Endothelial cell of umbilical vein (primary cell): ENCODE measurements at regions of chr3 and their contacts with region 1.

Region 1: DNA sequence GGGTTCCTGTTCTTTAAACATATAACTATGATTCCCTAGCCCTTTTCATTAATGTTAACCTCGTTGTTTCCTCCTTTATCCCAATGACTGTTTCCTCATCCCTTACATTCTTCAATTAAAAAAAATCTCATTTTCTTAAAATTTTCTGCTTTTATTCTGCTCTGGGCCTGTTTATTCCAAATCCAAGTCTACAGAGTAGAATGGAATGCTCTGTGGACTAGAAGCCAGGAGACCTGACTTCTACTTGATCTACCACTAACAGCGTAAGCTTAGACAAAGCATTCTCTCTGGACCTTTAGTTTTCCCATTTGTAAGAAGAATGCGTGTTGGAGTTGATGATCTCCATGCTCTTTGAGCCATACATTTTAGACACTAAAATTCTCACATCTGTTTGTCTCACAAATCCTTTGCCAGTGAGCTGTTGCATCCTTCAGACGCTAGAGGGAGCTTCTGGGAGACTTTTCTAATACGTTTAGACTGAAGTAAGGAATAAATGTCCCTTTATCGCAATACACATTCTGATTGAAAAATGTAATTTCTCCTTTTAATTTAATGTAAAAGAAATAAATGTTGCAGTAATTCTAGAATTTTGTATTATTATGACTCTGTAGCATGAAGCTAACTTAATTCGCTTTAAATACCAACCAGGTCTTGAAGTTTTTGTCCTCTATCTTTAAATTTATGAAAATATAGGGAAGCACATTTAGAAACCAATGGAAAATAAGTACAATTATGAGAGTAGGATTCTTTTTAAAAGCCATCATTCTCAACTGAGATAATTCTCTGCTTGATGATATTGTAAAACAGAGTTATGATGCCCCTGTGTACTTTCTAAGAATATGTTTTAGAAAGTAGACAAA is 21.7 kb upstream of the GMNC start:
- DNase-seq: peak; percentile 64
- H3K4me3 ChIP-seq: no peak overlapping the region
- H3K27ac ChIP-seq: no peak overlapping the region
- H3K4me1 ChIP-seq: no peaks in the 10 kb centered on the region
- H3K27me3 ChIP-seq: no peaks in the 10 kb centered on the region
- CTCF ChIP-seq: peak; percentile 77 to 78
- POLR2A ChIP-seq: no peak

Region 2: GRCh38 chr3:190862209-190863118 is 21.7 kb before region 1 on chr3 and contains the start of gene GMNC:
- CTCF ChIA-PET with region 1: interaction called, 13 read pairs
- POLR2A ChIA-PET with region 1: no interaction called
- dilution Hi-C with region 1: no loop called
- intact Hi-C with region 1: no loop called
- DNase-seq: peak; percentile 66
- H3K4me3 ChIP-seq: peak within 1 kb of the TSS; percentile 23 to 59 (median 46)
- H3K27ac ChIP-seq: no peak within 1 kb of the TSS
- H3K4me1 ChIP-seq: no peaks in the 10 kb centered on the region
- H3K27me3 ChIP-seq: peaks cover 2 to 14% of the 10 kb centered on the region in 2 experiments
- CTCF ChIP-seq: no peak
- POLR2A ChIP-seq: no peak
- total RNA-seq, gene GMNC: not detected in 2 replicates

Region 3: GRCh38 chr3:190870127-190870526 is 14.1 kb before region 1 on chr3:
- CTCF ChIA-PET with region 1: interaction called, 20 read pairs
- POLR2A ChIA-PET with region 1: interaction called, 3 read pairs
- dilution Hi-C with region 1: no loop called
- intact Hi-C with region 1: no loop called
- DNase-seq: no peak
- H3K4me3 ChIP-seq: no peak overlapping the region
- H3K27ac ChIP-seq: no peak overlapping the region
- H3K4me1 ChIP-seq: no peaks in the 10 kb centered on the region
- H3K27me3 ChIP-seq: peaks cover 0 to 2% of the 10 kb centered on the region in 2 experiments
- CTCF ChIP-seq: no peak
- POLR2A ChIP-seq: no peak

Region 4: DNA sequence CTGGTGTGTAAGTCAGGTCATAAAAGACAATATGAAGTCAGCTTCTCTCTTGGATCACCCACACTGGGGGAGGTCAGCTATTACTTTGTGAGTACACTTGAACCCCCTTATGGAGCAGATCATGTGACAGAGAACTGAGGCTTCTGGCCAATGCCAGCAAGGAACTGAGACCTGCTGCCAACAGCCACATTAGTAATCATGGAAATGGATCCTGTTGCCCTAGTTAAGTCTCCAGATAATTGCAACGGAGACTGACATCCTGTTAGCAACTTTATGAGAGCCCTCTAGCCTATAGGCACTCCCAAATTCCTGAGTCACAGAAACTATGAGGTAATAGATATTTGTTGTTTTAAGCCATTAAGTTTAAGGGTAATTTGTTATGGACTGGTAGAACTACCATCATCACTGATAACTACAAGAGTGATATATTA is 88.7 kb after region 1 on chr3:
- CTCF ChIA-PET with region 1: no interaction called
- POLR2A ChIA-PET with region 1: no interaction called
- dilution Hi-C with region 1: no loop called
- intact Hi-C with region 1: no loop called
- DNase-seq: no peak
- H3K4me3 ChIP-seq: no peak overlapping the region
- H3K27ac ChIP-seq: no peak overlapping the region
- H3K4me1 ChIP-seq: no peaks in the 10 kb centered on the region
- H3K27me3 ChIP-seq: no peaks in the 10 kb centered on the region
- CTCF ChIP-seq: no peak
- POLR2A ChIP-seq: no peak

Region 5: DNA sequence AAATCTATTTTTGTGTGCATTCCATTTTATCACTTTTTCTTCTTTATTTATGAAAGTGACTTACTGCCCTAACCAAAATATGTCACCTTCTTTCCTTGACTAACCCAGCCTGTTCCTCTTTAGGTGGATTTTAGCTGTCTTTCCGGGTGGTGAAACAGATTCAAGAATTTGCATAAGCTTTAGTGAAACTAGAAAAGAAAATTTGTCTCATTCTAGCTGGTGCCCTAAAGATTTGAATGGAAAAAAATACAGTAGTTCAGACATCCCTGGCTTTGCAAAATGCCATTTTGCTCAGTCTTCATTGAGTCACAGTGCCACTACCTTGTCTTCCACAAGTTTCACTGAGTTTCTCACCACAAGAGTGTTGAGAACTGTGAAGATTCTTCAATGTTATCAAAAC is 416.8 kb after region 1 on chr3:
- CTCF ChIA-PET with region 1: no interaction called
- POLR2A ChIA-PET with region 1: no interaction called
- dilution Hi-C with region 1: no loop called
- intact Hi-C with region 1: no loop called
- DNase-seq: no peak
- H3K4me3 ChIP-seq: no peak overlapping the region
- H3K27ac ChIP-seq: no peak overlapping the region
- H3K4me1 ChIP-seq: no peaks in the 10 kb centered on the region
- H3K27me3 ChIP-seq: no peaks in the 10 kb centered on the region
- CTCF ChIP-seq: no peak
- POLR2A ChIP-seq: no peak

Region 6: DNA sequence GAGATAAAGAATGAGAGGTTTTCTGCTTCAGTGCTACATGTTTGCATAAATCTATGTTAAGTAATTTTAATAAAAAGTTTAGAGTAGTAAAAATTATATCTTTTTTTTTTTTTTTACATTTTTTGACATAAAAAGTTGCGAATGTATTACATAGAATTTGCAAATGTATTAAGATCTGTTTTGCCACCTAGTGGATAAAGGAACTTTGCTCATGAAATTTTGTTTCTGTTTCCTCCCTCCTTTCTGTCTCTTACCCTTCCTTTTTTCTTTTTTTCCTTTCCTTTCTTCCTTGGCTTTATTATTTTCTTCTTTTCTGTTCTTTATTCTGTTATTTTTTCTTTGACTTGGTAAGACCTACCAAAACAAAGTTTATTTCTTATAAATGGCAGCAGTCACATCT is 504.6 kb after region 1 on chr3:
- CTCF ChIA-PET with region 1: no interaction called
- POLR2A ChIA-PET with region 1: no interaction called
- dilution Hi-C with region 1: no loop called
- intact Hi-C with region 1: loop called (anchors 10 kb)
- DNase-seq: no peak
- H3K4me3 ChIP-seq: no peak overlapping the region
- H3K27ac ChIP-seq: no peak overlapping the region
- H3K4me1 ChIP-seq: no peaks in the 10 kb centered on the region
- H3K27me3 ChIP-seq: no peaks in the 10 kb centered on the region
- CTCF ChIP-seq: peak in 1 of 2 donors; percentile 8
- POLR2A ChIP-seq: no peak